Ascending aorta (tissue), 2 donors: ENCODE measurements at regions of chr1 and their contacts with region 1.

Region 1: GRCh38 chr1:8660411-8660828 is 157.0 kb downstream of the RERE start:
- DNase-seq: peak in 1 of 2 donors; percentile 84
- H3K4me3 ChIP-seq: peak overlapping the region in 1 of 2 donors; percentile 9
- H3K27ac ChIP-seq: peak overlapping the region; percentile 89 to 95
- H3K4me1 ChIP-seq: peaks cover 15 to 32% of the 10 kb centered on the region in 2 donors
- H3K27me3 ChIP-seq: no peaks in the 10 kb centered on the region
- CTCF ChIP-seq: no peak

Region 2: GRCh38 chr1:8702850-8703810 is 42.7 kb after region 1 on chr1:
- intact Hi-C with region 1: loop called (anchors 1 kb)
- DNase-seq: peak; percentile 57 to 92
- H3K4me3 ChIP-seq: peak overlapping the region; percentile 65 to 95
- H3K27ac ChIP-seq: peak overlapping the region; percentile 76 to 93
- H3K4me1 ChIP-seq: peaks cover 0 to 9% of the 10 kb centered on the region in 2 donors
- H3K27me3 ChIP-seq: no peaks in the 10 kb centered on the region
- CTCF ChIP-seq: peak in 1 of 3 experiments; percentile 39